Heart left ventricle (tissue), 16 donors: ENCODE measurements at regions of chr3 and their contacts with region 1.

Region 1: GRCh38 chr3:36786921-36787890 is 22.9 kb upstream of the DCLK3 start:
- DNase-seq: peak in 2 of 5 donors; percentile 26 to 29
- ATAC-seq: peak in 3 of 4 donors; percentile 30 to 80 (median 37)
- H3K4me3 ChIP-seq: no peak overlapping the region
- H3K27ac ChIP-seq: peak overlapping the region in 1 of 12 donors; percentile 35
- H3K4me1 ChIP-seq: peaks cover 0 to 12% (median 5%) of the 10 kb centered on the region in 12 donors
- H3K27me3 ChIP-seq: no peaks in the 10 kb centered on the region
- CTCF ChIP-seq: no peak
- POLR2A ChIP-seq: no peak

Region 2: DNA sequence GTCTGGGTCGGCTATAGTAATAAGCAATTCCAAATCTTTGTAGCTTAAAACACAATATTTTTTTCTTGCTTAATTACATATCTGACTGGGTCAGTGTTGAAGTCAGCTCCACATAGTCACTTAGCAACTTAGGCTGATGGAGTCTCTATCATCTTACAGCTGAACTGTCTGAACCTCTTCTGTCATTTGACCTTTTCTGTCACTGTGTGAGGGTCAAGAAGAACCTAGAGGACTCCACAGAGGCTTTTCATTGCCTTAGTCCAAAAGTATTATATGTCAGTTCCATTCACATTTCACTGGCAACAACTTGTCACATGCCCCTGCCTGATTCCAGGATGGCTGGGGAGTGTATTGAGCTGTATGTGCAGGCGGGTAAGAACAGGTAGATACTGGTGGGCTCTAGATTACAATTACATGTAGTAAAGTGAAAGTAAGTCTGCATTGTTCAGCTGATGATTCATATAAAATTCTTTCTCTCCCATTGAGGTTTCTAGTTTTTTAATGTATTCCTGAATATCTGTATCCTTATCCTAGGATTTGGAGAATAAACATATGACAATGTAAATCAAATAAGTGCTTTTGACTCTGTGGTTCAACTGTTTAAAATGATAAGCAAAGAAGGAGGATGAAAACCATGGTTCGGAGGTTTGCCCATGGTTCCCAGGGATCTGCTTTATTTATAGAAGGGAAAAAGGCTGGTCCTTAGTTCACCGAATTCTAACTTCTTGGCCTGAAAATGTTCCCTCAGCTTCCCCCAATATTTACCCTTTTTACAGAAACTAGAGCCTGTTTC is 1153.7 kb before region 1 on chr3:
- intact Hi-C with region 1: no loop called
- DNase-seq: no peak
- ATAC-seq: no peak
- H3K4me3 ChIP-seq: no peak overlapping the region
- H3K27ac ChIP-seq: no peak overlapping the region
- H3K4me1 ChIP-seq: no peaks in the 10 kb centered on the region
- H3K27me3 ChIP-seq: peaks cover 0 to 14% (median under 1%) of the 10 kb centered on the region in 9 donors
- CTCF ChIP-seq: no peak
- POLR2A ChIP-seq: no peak

Region 3: GRCh38 chr3:36741285-36741684 is 45.9 kb before region 1 on chr3:
- intact Hi-C with region 1: loop called in 2 of 10 experiments (anchors 5 to 10 kb)
- DNase-seq: no peak
- ATAC-seq: no peak
- H3K4me3 ChIP-seq: no peak overlapping the region
- H3K27ac ChIP-seq: no peak overlapping the region
- H3K4me1 ChIP-seq: peaks cover 0 to 17% (median 4%) of the 10 kb centered on the region in 12 donors
- H3K27me3 ChIP-seq: no peaks in the 10 kb centered on the region
- CTCF ChIP-seq: peak in 5 of 12 donors; percentile 10 to 33 (median 25)
- POLR2A ChIP-seq: no peak